Activated CD4-positive, alpha-beta T cell treated with anti-CD3 and anti-CD28 coated beads for 36 hours (primary cell): ENCODE measurements at regions of chr7 and their contacts with region 1.

Region 1: GRCh38 chr7:39686261-39686924 is 63.0 kb downstream of the RALA start:
- DNase-seq: peak; percentile 23
- ATAC-seq: peak; percentile 83
- H3K4me3 Mint-ChIP-seq: no peak overlapping the region
- H3K27ac Mint-ChIP-seq: peak overlapping the region; percentile 47
- H3K4me1 Mint-ChIP-seq: peaks cover 55% of the 10 kb centered on the region
- H3K27me3 Mint-ChIP-seq: no peaks in the 10 kb centered on the region

Region 2: DNA sequence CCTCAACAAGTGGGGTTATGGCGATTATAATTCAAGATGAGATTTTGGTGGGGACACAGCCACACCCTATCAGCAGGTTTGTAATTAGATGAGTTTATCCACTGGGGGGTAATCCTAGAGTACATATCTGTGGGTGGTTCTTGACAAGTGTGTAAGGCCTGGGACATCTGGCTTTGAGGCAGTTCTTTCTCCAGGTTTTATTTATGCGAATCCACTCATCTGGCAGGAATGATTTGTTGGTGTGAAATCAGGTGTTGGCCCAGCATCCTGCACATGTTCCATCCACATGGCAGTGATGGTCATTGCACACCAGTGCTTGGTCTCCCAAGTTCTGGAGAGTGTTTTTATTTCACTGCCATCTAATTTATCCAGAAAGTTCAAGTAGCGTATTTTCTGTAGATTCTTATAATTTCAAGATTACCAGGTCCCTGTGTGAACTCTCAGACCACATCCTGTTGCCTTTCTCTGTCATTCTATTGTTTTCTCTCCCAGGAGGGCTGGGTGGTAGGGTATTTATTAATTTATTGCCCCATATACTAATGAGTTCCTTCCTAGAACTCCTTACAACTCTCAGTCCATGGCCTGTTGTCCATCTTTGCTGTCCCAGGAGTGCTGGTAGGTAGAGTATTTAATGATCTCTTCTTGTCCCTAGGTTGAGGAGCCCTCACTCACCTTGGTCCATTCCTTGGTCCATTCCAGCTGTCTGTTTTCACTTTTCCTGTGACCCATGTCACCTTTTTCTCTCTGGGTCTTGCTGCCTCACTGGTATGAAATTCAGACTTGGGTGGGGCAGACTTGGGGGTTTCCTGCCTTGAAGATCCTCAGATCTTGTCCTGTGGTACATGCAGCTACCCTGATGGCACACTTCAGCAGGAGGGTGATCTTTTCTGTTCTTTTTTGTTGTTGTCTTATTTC is 52.6 kb before region 1 on chr7:
- CTCF ChIA-PET with region 1: interaction called, 3 read pairs
- POLR2A ChIA-PET with region 1: interaction called, 3 read pairs
- intact Hi-C with region 1: loop called in 1 of 2 experiments (anchors 5 kb)
- DNase-seq: no peak
- ATAC-seq: peak; percentile 50
- H3K4me3 Mint-ChIP-seq: no peak overlapping the region
- H3K27ac Mint-ChIP-seq: peak overlapping the region; percentile 84
- H3K4me1 Mint-ChIP-seq: peaks cover 76% of the 10 kb centered on the region
- H3K27me3 Mint-ChIP-seq: no peaks in the 10 kb centered on the region